ENCODE measurements at regions of chr12 and their contacts with region 1.

Region 1: GRCh38 chr12:63843721-63844390 is 644 bp upstream of the SRGAP1 start:
- DNase-seq: peak; percentile 97
- H3K4me3 ChIP-seq: peak overlapping the region; percentile 56 to 70 (median 63)
- H3K27ac ChIP-seq: peak overlapping the region; percentile 55
- H3K4me1 ChIP-seq: peaks cover 15% of the 10 kb centered on the region
- H3K27me3 ChIP-seq: no peaks in the 10 kb centered on the region
- CTCF ChIP-seq: peak; percentile 94 to 98
- POLR2A ChIP-seq: no peak

Region 2: GRCh38 chr12:63880742-63881263 is 36.9 kb after region 1 on chr12:
- CTCF ChIA-PET with region 1: no interaction called
- POLR2A ChIA-PET with region 1: no interaction called
- dilution Hi-C with region 1: no loop called
- intact Hi-C with region 1: no loop called
- DNase-seq: no peak
- H3K4me3 ChIP-seq: no peak overlapping the region
- H3K27ac ChIP-seq: no peak overlapping the region
- H3K4me1 ChIP-seq: no peaks in the 10 kb centered on the region
- H3K27me3 ChIP-seq: no peaks in the 10 kb centered on the region
- CTCF ChIP-seq: no peak
- POLR2A ChIP-seq: no peak

Region 3: GRCh38 chr12:63917864-63918799 is 74.3 kb after region 1 on chr12:
- CTCF ChIA-PET with region 1: interaction called, 14 read pairs
- POLR2A ChIA-PET with region 1: no interaction called
- dilution Hi-C with region 1: no loop called
- intact Hi-C with region 1: loop called (anchors 1 kb)
- DNase-seq: peak; percentile 83
- H3K4me3 ChIP-seq: peak overlapping the region in 1 of 3 experiments; percentile 15
- H3K27ac ChIP-seq: peak overlapping the region; percentile 89
- H3K4me1 ChIP-seq: peaks cover 56% of the 10 kb centered on the region
- H3K27me3 ChIP-seq: no peaks in the 10 kb centered on the region
- CTCF ChIP-seq: no peak
- POLR2A ChIP-seq: no peak

Region 4: GRCh38 chr12:64077922-64078321 is 234.1 kb after region 1 on chr12:
- CTCF ChIA-PET with region 1: interaction called, 4 read pairs
- POLR2A ChIA-PET with region 1: no interaction called
- dilution Hi-C with region 1: no loop called
- intact Hi-C with region 1: loop called (anchors 2 kb)
- DNase-seq: peak; percentile 15
- H3K4me3 ChIP-seq: no peak overlapping the region
- H3K27ac ChIP-seq: no peak overlapping the region
- H3K4me1 ChIP-seq: no peaks in the 10 kb centered on the region
- H3K27me3 ChIP-seq: no peaks in the 10 kb centered on the region
- CTCF ChIP-seq: no peak
- POLR2A ChIP-seq: no peak

Region 5: GRCh38 chr12:64181504-64182291 is 337.8 kb after region 1 on chr12:
- CTCF ChIA-PET with region 1: interaction called, 56 read pairs
- POLR2A ChIA-PET with region 1: no interaction called
- dilution Hi-C with region 1: no loop called
- intact Hi-C with region 1: loop called (anchors 1 kb)
- DNase-seq: peak; percentile 87
- H3K4me3 ChIP-seq: peak overlapping the region in 1 of 3 experiments; percentile 30
- H3K27ac ChIP-seq: peak overlapping the region; percentile 85
- H3K4me1 ChIP-seq: peaks cover 53% of the 10 kb centered on the region
- H3K27me3 ChIP-seq: no peaks in the 10 kb centered on the region
- CTCF ChIP-seq: peak; percentile 24 to 57
- POLR2A ChIP-seq: no peak

Region 6: GRCh38 chr12:64256166-64256800 is 412.4 kb after region 1 on chr12:
- CTCF ChIA-PET with region 1: interaction called, 146 read pairs
- POLR2A ChIA-PET with region 1: no interaction called
- dilution Hi-C with region 1: no loop called
- intact Hi-C with region 1: loop called (anchors 1 kb)
- DNase-seq: peak; percentile 61
- H3K4me3 ChIP-seq: no peak overlapping the region
- H3K27ac ChIP-seq: no peak overlapping the region
- H3K4me1 ChIP-seq: no peaks in the 10 kb centered on the region
- H3K27me3 ChIP-seq: no peaks in the 10 kb centered on the region
- CTCF ChIP-seq: peak; percentile 25 to 27
- POLR2A ChIP-seq: no peak

Measured in endothelial cell of umbilical vein (primary cell).